SK-N-SH (cell line): ENCODE measurements at regions of chr11 and their contacts with region 1.

Region 1: DNA sequence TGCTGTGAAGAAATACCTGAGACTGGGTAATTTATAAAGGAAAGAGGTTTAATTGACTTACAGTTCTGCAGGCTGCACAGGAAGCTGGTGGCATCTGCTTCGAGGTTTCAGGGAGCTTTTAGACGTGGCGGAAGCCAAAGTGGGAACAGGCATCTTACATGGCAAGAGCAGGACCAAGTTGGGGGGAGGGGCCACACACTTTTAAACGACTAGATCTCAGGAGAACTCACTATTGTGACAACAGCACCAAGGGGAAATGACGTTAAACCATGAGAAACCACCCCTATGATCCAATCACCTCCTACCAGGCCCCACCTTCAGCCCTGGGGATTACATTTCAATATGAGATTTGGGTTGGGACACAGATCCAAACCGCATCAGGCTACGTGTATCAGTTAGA is 11.1 kb upstream of the SCGB1D4 start:
- DNase-seq: no peak
- H3K4me3 ChIP-seq: peak overlapping the region in 1 of 2 experiments; percentile 26; a peak in 1 of 4 replicates
- H3K27ac ChIP-seq: no peak overlapping the region
- H3K4me1 ChIP-seq: no peaks in the 10 kb centered on the region
- H3K27me3 ChIP-seq: peaks cover 32% of the 10 kb centered on the region
- CTCF ChIP-seq: no peak
- EP300 ChIP-seq: no peak
- RAD21 ChIP-seq: no peak

Region 2: GRCh38 chr11:62122076-62122475 is 187.9 kb before region 1 on chr11:
- CTCF ChIA-PET with region 1: no interaction called
- POLR2A ChIA-PET with region 1: no interaction called
- DNase-seq: peak; percentile 28
- H3K4me3 ChIP-seq: no peak overlapping the region
- H3K27ac ChIP-seq: no peak overlapping the region
- H3K4me1 ChIP-seq: peaks cover 8 to 13% of the 10 kb centered on the region in 2 experiments; a peak in 2 of 4 replicates
- H3K27me3 ChIP-seq: no peaks in the 10 kb centered on the region
- CTCF ChIP-seq: 0 out of 2 replicates have a peak, but pooled peaks have one; percentile 11
- EP300 ChIP-seq: no peak
- RAD21 ChIP-seq: no peak

Region 3: DNA sequence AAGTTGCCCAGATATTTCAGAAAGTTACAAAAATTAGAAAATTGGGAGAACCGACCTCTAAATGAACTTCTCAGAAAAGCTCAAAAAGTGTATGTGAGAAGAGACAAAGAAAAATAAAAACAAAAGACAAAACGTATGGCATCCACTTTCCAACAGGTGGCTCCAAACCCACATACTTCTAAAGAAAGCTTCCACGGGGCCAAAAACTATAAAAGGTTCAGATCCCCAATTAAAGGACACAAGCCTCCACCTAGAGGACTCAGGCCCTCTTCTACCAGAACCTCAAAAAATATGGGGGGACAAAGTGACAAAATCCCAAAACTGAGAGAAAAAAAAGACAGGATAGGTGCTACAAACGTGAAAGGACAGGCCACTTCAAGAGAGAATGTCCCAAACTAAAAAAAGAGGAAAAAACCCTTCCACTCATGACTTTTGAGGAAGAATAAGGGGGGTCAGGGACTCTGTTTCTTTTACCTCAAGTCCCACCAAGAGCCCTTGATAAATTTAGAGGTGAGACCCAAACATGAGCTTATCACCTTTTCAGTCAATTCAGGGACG is 92.7 kb before region 1 on chr11:
- CTCF ChIA-PET with region 1: interaction called, 12 read pairs
- POLR2A ChIA-PET with region 1: no interaction called
- DNase-seq: no peak
- H3K4me3 ChIP-seq: no peak overlapping the region
- H3K27ac ChIP-seq: no peak overlapping the region
- H3K4me1 ChIP-seq: no peaks in the 10 kb centered on the region
- H3K27me3 ChIP-seq: no peaks in the 10 kb centered on the region; the same call in 1 of the 2 replicates
- CTCF ChIP-seq: peak; percentile 53
- EP300 ChIP-seq: no peak
- RAD21 ChIP-seq: peak; percentile 66

Region 4: DNA sequence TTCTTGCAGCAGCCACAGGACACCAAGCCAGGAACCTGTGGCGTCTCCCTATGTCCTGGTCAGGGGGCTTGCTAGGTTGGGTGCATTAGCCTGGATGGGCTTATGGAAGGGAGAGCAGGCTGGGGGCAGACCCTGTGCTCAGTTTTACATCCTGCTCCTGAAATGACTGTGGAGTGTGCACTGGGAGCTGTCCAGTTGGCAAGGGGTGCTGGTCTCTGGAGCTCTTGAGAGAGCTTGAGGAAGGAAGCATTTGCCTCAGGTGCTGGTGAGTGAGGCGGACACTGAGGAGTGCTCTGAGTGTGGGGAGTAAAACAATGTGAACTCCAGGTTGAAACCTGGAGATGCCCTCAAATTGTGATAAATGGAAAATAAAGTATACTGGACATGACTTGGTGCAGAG is 14.5 kb before region 1 on chr11:
- CTCF ChIA-PET with region 1: interaction called, 38 read pairs
- POLR2A ChIA-PET with region 1: no interaction called
- DNase-seq: no peak
- H3K4me3 ChIP-seq: no peak overlapping the region
- H3K27ac ChIP-seq: no peak overlapping the region
- H3K4me1 ChIP-seq: no peaks in the 10 kb centered on the region
- H3K27me3 ChIP-seq: no peaks in the 10 kb centered on the region; the same call in 1 of the 2 replicates
- CTCF ChIP-seq: no peak
- EP300 ChIP-seq: no peak
- RAD21 ChIP-seq: no peak